ENCODE measurements at regions of chr1 and their contacts with region 1.

Region 1: DNA sequence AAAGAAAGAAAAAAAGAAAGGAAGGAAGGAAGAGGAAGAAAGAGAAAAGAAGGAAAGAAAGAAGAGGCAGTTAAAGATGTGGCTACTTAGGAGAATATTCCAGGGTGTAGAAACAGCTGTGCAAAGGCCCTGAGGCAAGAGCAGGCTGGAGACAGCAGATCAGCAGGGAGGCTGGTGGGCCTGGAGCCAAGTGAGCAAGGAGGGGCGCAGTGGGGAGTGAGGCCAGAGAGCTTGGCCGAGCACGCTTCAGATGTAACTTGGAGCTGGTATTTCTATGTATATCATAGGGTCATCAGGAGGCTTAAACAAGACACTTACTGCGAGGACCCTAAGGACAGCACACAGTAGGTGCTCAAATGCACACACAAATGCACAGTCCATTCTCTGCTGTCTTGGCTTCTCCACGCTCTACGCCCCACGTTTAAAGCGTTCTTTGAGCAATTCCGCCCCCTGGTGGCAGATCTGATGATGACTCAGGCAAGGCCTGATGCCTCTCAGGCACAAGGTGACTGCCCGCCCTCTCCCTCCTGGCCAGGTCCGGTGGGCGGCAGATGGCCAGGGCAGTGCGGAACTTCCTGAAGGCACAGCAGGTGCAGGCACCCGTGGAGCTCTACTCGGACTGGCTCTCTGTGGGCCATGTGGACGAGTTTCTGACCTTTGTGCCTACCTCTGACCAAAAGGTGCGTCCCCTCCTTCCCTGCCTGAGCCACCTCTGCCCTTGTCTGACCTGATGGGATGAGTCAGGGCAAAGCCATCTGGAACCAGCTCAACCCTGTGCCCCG is 11.9 kb upstream of the PADI3 start:
- DNase-seq: peak; percentile 86
- ATAC-seq: peak; percentile 71
- H3K4me3 ChIP-seq: no peak overlapping the region
- H3K4me3 Mint-ChIP-seq: no peak overlapping the region
- H3K27ac ChIP-seq: no peak overlapping the region
- H3K27ac Mint-ChIP-seq: peak overlapping the region; percentile 3
- H3K4me1 ChIP-seq: no peaks in the 10 kb centered on the region
- H3K4me1 Mint-ChIP-seq: peaks cover 18% of the 10 kb centered on the region
- H3K27me3 ChIP-seq: no peaks in the 10 kb centered on the region
- H3K27me3 Mint-ChIP-seq: peaks cover 2% of the 10 kb centered on the region
- CTCF ChIP-seq: peak; percentile 89

Region 2: DNA sequence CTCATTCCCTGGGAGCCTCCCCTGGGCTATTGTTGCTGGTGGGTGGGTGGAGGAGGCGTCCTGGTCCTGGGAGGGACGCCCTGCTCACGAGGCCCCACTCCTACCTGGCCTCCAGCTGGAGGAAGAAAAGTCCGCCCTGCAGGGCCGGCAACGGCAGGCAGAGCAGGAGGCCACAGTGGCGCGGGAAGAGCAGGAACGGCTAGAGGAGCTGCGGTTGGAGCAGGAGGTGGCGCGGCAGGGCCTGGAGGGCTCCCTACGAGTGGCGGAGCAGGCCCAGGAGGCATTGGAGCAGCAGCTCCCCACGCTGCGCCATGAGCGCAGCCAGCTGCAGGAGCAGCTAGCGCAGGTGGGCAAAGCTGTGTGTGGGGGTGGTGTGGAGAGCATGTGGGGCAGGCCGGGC is 290.3 kb before region 1 on chr1:
- CTCF ChIA-PET with region 1: interaction called, 6 read pairs
- POLR2A ChIA-PET with region 1: no interaction called
- intact Hi-C with region 1: loop called (anchors 2 kb)
- DNase-seq: no peak
- ATAC-seq: no peak
- H3K4me3 ChIP-seq: no peak overlapping the region
- H3K4me3 Mint-ChIP-seq: no peak overlapping the region
- H3K27ac ChIP-seq: no peak overlapping the region
- H3K27ac Mint-ChIP-seq: no peak overlapping the region
- H3K4me1 ChIP-seq: peaks cover 0 to 3% of the 10 kb centered on the region in 2 donors
- H3K4me1 Mint-ChIP-seq: peaks cover 4% of the 10 kb centered on the region
- H3K27me3 ChIP-seq: no peaks in the 10 kb centered on the region
- H3K27me3 Mint-ChIP-seq: no peaks in the 10 kb centered on the region
- CTCF ChIP-seq: no peak

Region 3: DNA sequence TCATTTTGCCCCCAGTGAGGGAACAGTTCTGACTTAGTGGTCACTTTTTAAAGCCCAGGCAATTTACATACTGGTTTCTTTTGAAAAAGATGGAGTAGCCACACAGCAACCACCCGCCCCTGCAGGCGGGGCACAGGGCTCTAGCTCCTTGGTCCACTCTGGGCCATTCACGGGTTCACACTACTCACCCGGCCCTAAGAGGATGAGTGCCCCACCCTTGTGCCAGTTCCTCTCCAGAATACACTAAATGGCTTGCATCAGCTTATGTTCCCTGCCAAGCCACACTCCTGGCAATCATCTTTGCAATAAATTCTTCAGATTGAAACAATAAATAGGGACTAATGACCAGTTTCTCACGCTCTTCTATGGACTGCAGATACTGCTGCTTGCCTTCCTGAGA is 209.6 kb before region 1 on chr1:
- CTCF ChIA-PET with region 1: no interaction called
- POLR2A ChIA-PET with region 1: no interaction called
- intact Hi-C with region 1: no loop called
- DNase-seq: no peak
- ATAC-seq: no peak
- H3K4me3 ChIP-seq: no peak overlapping the region
- H3K4me3 Mint-ChIP-seq: no peak overlapping the region
- H3K27ac ChIP-seq: no peak overlapping the region
- H3K27ac Mint-ChIP-seq: no peak overlapping the region
- H3K4me1 ChIP-seq: peaks cover 0 to 5% of the 10 kb centered on the region in 2 donors
- H3K4me1 Mint-ChIP-seq: no peaks in the 10 kb centered on the region
- H3K27me3 ChIP-seq: no peaks in the 10 kb centered on the region
- H3K27me3 Mint-ChIP-seq: no peaks in the 10 kb centered on the region
- CTCF ChIP-seq: no peak

Region 4: GRCh38 chr1:17059739-17060460 is 177.1 kb before region 1 on chr1:
- CTCF ChIA-PET with region 1: interaction called, 7 read pairs
- POLR2A ChIA-PET with region 1: no interaction called
- intact Hi-C with region 1: loop called (anchors 1 kb)
- DNase-seq: peak; percentile 65
- ATAC-seq: peak; percentile 97
- H3K4me3 ChIP-seq: peak overlapping the region in 1 of 5 experiments; percentile 20
- H3K4me3 Mint-ChIP-seq: peak overlapping the region; percentile 21
- H3K27ac ChIP-seq: no peak overlapping the region
- H3K27ac Mint-ChIP-seq: no peak overlapping the region
- H3K4me1 ChIP-seq: peaks cover 5 to 10% of the 10 kb centered on the region in 2 donors
- H3K4me1 Mint-ChIP-seq: peaks cover 15% of the 10 kb centered on the region
- H3K27me3 ChIP-seq: no peaks in the 10 kb centered on the region
- H3K27me3 Mint-ChIP-seq: peaks cover 6% of the 10 kb centered on the region
- CTCF ChIP-seq: peak; percentile 72

Region 5: DNA sequence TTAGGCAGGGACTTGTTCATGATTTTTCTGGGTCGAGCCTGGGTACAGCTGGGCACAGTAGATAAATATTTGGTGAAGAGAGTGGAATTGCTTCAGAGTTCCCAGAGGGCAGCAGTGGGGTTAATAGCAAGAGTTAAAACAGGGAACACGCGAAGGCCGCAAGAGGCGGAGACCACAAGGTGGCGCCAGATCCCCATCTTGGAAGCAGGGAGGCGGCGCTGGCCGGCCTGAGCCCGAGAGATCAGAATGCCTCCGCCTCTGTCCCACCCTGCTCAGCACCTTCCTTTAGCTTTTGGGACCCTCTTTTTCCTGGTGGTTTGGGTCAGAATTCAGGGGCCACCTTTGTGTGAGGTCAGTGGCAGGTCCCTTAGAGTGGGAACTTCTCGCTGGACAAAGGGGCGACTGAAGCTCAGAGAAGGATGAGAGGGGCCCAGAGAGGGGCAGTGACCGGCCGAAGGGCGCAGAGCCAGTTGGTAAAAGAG is 111.2 kb before region 1 on chr1:
- CTCF ChIA-PET with region 1: interaction called, 373 read pairs
- POLR2A ChIA-PET with region 1: interaction called, 9 read pairs
- intact Hi-C with region 1: loop called (anchors 1 kb)
- DNase-seq: peak; percentile 85
- ATAC-seq: peak; percentile 79
- H3K4me3 ChIP-seq: no peak overlapping the region
- H3K4me3 Mint-ChIP-seq: no peak overlapping the region
- H3K27ac ChIP-seq: no peak overlapping the region
- H3K27ac Mint-ChIP-seq: peak overlapping the region; percentile 37
- H3K4me1 ChIP-seq: peaks cover 4 to 13% of the 10 kb centered on the region in 2 donors
- H3K4me1 Mint-ChIP-seq: peaks cover 23% of the 10 kb centered on the region
- H3K27me3 ChIP-seq: peaks cover 0 to 8% (median 0%) of the 10 kb centered on the region in 4 experiments
- H3K27me3 Mint-ChIP-seq: peaks cover 3% of the 10 kb centered on the region
- CTCF ChIP-seq: peak; percentile 97

Region 6: GRCh38 chr1:17141441-17142197 is 95.4 kb before region 1 on chr1:
- CTCF ChIA-PET with region 1: interaction called, 19 read pairs
- POLR2A ChIA-PET with region 1: no interaction called
- intact Hi-C with region 1: loop called (anchors 5 kb)
- DNase-seq: peak; percentile 73
- ATAC-seq: peak; percentile 77
- H3K4me3 ChIP-seq: no peak overlapping the region
- H3K4me3 Mint-ChIP-seq: peak overlapping the region; percentile 60
- H3K27ac ChIP-seq: peak overlapping the region in 1 of 2 donors; percentile 20
- H3K27ac Mint-ChIP-seq: peak overlapping the region; percentile 87
- H3K4me1 ChIP-seq: peaks cover 5 to 18% of the 10 kb centered on the region in 2 donors
- H3K4me1 Mint-ChIP-seq: peaks cover 24% of the 10 kb centered on the region
- H3K27me3 ChIP-seq: peaks cover 0 to 3% (median 0%) of the 10 kb centered on the region in 4 experiments
- H3K27me3 Mint-ChIP-seq: peaks cover 2% of the 10 kb centered on the region
- CTCF ChIP-seq: no peak

Region 7: DNA sequence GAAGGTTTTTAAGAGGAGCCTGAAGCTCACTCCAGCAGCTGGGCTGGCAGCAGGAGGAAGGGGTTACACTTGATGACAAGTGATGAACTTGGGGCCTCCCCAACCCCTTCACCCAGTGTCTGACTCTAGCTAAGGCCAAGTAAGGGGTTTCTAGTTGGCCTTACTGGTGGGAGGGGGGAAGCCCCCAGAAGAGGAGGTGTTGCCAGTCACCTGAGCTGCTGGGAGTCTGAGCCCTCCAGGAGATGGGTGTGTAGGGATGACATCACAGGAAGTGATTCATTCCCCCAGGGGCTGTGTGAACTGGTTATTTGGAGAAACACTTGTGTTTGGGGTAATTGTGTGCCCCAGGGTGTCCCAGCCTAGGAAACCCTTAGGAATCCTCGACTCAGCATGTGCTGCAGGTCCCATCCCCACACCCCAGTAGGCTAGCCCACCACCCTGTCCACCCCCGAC is 29.0 kb before region 1 on chr1:
- CTCF ChIA-PET with region 1: interaction called, 42 read pairs
- POLR2A ChIA-PET with region 1: no interaction called
- intact Hi-C with region 1: no loop called
- DNase-seq: peak; percentile 67
- ATAC-seq: peak; percentile 80
- H3K4me3 ChIP-seq: no peak overlapping the region
- H3K4me3 Mint-ChIP-seq: peak overlapping the region; percentile 85
- H3K27ac ChIP-seq: no peak overlapping the region
- H3K27ac Mint-ChIP-seq: peak overlapping the region; percentile 60
- H3K4me1 ChIP-seq: peaks cover 22% of the 10 kb centered on the region in 2 donors
- H3K4me1 Mint-ChIP-seq: peaks cover 32% of the 10 kb centered on the region
- H3K27me3 ChIP-seq: peaks cover 0 to 7% (median 0%) of the 10 kb centered on the region in 4 experiments
- H3K27me3 Mint-ChIP-seq: peaks cover 6% of the 10 kb centered on the region
- CTCF ChIP-seq: no peak

Region 8: GRCh38 chr1:17335821-17336710 is 99.1 kb after region 1 on chr1:
- CTCF ChIA-PET with region 1: interaction called, 7 read pairs
- POLR2A ChIA-PET with region 1: no interaction called
- intact Hi-C with region 1: loop called (anchors 5 kb)
- DNase-seq: peak; percentile 57
- ATAC-seq: peak; percentile 51
- H3K4me3 ChIP-seq: no peak overlapping the region
- H3K4me3 Mint-ChIP-seq: no peak overlapping the region
- H3K27ac ChIP-seq: no peak overlapping the region
- H3K27ac Mint-ChIP-seq: no peak overlapping the region
- H3K4me1 ChIP-seq: no peaks in the 10 kb centered on the region
- H3K4me1 Mint-ChIP-seq: no peaks in the 10 kb centered on the region
- H3K27me3 ChIP-seq: peaks cover 0 to 11% (median 0%) of the 10 kb centered on the region in 4 experiments
- H3K27me3 Mint-ChIP-seq: peaks cover 24% of the 10 kb centered on the region
- CTCF ChIP-seq: peak; percentile 93

Region 9: DNA sequence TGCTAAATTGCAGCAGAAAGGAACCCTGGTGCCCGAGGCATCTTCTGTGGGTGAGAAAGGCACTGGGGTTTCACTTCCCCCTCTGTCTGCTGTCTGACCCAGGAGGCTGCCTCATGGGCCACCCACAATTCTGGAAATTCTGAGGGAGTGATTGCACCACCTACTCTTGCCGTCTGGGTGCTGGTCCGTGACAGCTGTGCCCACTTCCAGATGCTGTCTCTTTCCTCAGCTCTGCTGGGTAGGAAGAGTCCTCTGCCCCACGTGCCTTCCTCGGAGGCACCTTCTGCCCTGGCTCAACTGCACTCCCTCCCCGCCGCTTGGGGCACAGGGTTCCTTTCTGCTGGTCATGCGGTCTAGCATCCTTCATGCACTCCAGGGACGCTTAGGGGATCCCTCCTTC is 398.8 kb after region 1 on chr1:
- CTCF ChIA-PET with region 1: no interaction called
- POLR2A ChIA-PET with region 1: no interaction called
- intact Hi-C with region 1: no loop called
- DNase-seq: peak; percentile 74
- ATAC-seq: peak; percentile 89
- H3K4me3 ChIP-seq: no peak overlapping the region
- H3K4me3 Mint-ChIP-seq: peak overlapping the region; percentile 70
- H3K27ac ChIP-seq: no peak overlapping the region
- H3K27ac Mint-ChIP-seq: peak overlapping the region; percentile 82
- H3K4me1 ChIP-seq: peaks cover 6 to 33% of the 10 kb centered on the region in 2 donors
- H3K4me1 Mint-ChIP-seq: peaks cover 29% of the 10 kb centered on the region
- H3K27me3 ChIP-seq: no peaks in the 10 kb centered on the region
- H3K27me3 Mint-ChIP-seq: no peaks in the 10 kb centered on the region
- CTCF ChIP-seq: no peak

Measured in B cell (primary cell).